Mammary epithelial cell (primary cell): ENCODE measurements at regions of chr20 and their contacts with region 1.

Region 1: GRCh38 chr20:35511814-35512420 is 17.5 kb downstream of the C20orf173 start:
- DNase-seq: peak; percentile 15
- H3K4me3 ChIP-seq: no peak overlapping the region
- H3K27ac ChIP-seq: no peak overlapping the region
- H3K4me1 ChIP-seq: peaks cover 18% of the 10 kb centered on the region
- H3K27me3 ChIP-seq: no peaks in the 10 kb centered on the region
- CTCF ChIP-seq: peak; percentile 49 to 69

Region 2: DNA sequence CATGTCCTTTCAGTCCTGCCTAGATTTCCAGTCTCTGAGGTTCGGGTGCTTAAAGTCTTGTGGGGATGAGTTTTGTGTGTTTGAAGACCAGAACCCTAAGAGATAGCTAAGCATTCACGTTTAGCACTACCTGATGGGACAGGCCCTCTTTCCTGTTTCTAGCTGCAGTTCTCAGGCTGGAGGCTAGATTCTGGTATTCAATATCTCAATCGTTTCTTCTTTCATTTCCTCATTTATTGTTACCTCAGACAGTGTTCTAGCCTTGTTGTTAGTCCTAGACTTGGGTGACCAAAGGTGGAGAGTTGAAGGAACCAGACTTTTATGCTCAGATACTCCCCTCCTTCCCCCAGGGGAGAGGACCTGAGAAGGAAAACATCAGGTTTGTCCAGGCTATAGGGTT is 39.7 kb before region 1 on chr20:
- CTCF ChIA-PET with region 1: no interaction called
- dilution Hi-C with region 1: loop called (anchors 5 kb)
- in situ Hi-C with region 1: no loop called
- intact Hi-C with region 1: no loop called
- DNase-seq: no peak
- H3K4me3 ChIP-seq: no peak overlapping the region
- H3K27ac ChIP-seq: no peak overlapping the region
- H3K4me1 ChIP-seq: no peaks in the 10 kb centered on the region
- H3K27me3 ChIP-seq: no peaks in the 10 kb centered on the region
- CTCF ChIP-seq: no peak

Region 3: GRCh38 chr20:35699127-35699975 is 187.4 kb after region 1 on chr20 and contains the starts of genes NFS1 and ROMO1:
- CTCF ChIA-PET with region 1: no interaction called
- dilution Hi-C with region 1: no loop called
- in situ Hi-C with region 1: no loop called
- intact Hi-C with region 1: loop called (anchors 5 kb)
- DNase-seq: peak; percentile 78
- H3K4me3 ChIP-seq: peak within 1 kb of the TSS; percentile 58 to 94 (median 81)
- H3K27ac ChIP-seq: peak within 1 kb of the TSS; percentile 78
- H3K4me1 ChIP-seq: peaks cover 17% of the 10 kb centered on the region
- H3K27me3 ChIP-seq: no peaks in the 10 kb centered on the region
- CTCF ChIP-seq: peak in 1 of 2 donors; percentile 29
- total RNA-seq, gene NFS1: 28.8 to 33.0 TPM
- total RNA-seq, gene ROMO1: 113 to 176 TPM

Region 4: DNA sequence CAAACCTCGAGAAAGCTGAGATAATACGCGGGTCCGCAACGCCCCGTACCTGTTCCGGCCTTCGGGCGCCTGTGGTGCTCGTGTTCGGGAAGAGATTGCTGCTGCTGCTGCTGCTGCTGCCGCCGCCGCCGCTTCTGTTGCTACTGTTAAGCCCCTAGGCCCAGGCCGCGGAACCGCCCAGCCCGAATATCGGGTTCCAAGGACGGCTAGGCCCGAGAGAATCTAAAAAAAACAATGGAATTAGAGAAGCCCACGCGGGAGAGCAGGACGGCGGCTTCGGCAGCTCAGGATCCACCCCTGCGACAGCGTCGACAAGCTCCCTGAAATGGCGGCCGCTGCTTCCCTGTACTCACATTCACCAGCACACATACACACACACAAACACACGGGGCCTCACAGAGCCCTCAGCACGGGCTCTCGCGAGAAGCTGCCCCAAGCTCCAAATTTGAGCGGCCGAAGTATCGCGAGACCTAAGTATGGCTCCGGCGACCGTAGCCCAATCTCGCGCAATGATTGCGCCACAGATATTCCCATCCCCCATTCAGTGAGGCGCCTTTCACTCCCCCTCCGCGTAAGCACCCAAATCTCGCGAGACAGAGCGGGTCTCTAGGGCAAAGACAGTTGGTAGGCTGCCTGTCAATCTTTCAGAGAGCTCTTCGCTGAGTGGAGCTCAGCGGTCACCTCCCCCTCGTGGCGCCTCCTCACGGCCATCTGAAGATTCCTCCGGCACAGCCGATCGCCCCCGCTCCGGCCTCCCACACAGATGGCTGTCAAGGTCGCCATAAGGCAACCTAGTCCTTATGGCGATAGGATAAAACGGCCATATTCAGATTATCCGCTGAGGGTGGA is 230.2 kb after region 1 on chr20 and contains the start of gene RBM39:
- CTCF ChIA-PET with region 1: no interaction called
- dilution Hi-C with region 1: no loop called
- in situ Hi-C with region 1: no loop called
- intact Hi-C with region 1: no loop called
- DNase-seq: peak; percentile 100
- H3K4me3 ChIP-seq: peak within 1 kb of the TSS; percentile 78 to 93 (median 86)
- H3K27ac ChIP-seq: peak within 1 kb of the TSS; percentile 95
- H3K4me1 ChIP-seq: peaks cover 26% of the 10 kb centered on the region
- H3K27me3 ChIP-seq: no peaks in the 10 kb centered on the region
- CTCF ChIP-seq: peak in 1 of 2 donors; percentile 47
- total RNA-seq, gene RBM39: 188 to 283 TPM